ENCODE measurements at regions of chr12 and their contacts with region 1.

Region 1: DNA sequence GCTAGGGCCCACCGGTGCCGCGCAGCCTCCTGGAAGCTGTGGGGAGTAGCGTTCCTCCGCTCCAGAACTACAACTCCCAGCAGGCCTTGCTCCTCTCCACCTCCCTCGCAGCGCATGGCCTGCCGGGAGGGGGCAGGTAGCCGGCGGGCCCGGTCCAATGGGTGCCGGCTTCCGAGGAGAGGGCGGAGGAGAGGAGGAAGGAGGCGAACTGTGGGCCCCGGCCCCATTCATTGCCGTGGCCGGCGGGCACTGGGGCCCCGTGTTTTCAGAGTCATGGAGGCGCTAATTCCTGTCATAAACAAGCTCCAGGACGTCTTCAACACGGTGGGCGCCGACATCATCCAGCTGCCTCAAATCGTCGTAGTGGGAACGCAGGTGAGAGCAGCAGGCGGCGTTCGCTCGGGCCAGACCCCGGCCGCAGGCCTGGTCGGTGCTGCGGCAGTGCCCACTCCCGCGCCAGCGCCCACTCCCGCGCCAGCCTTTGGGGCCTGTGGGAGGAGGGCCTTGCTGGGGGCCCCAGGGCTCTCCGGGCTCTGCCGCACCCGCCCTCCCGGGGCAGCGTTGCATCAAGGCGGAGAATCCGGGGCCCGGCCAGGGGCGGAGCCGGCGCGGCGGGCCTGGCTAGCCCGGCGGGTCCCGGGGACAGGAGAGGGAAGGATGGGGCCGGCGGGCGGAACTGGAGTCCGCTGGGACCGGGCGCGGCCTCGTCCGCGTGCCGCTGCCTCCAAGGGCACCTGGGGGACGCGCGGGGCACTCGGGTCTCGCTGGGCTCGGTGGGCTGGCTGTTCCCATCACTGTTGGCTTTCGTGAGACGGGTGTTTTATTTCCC is at the start of gene DNM1L:
- DNase-seq: peak; percentile 92 to 97
- H3K4me3 ChIP-seq: peak within 1 kb of the TSS; percentile 73 to 83
- H3K27ac ChIP-seq: peak within 1 kb of the TSS; percentile 92 to 94
- H3K4me1 ChIP-seq: peaks cover 0 to 26% (median 8%) of the 10 kb centered on the region in 4 donors
- H3K27me3 ChIP-seq: no peaks in the 10 kb centered on the region
- CTCF ChIP-seq: peak in 1 of 2 experiments; percentile 20

Region 2: GRCh38 chr12:32106517-32107358 is 572.6 kb before region 1 on chr12 and contains the start of gene BICD1:
- intact Hi-C with region 1: loop called (anchors 10 kb)
- DNase-seq: peak; percentile 90 to 95
- H3K4me3 ChIP-seq: peak within 1 kb of the TSS; percentile 77 to 83
- H3K27ac ChIP-seq: peak within 1 kb of the TSS; percentile 88 to 92
- H3K4me1 ChIP-seq: peaks cover 0 to 19% (median 10%) of the 10 kb centered on the region in 4 donors
- H3K27me3 ChIP-seq: no peaks in the 10 kb centered on the region
- CTCF ChIP-seq: peak; percentile 27 to 35

Region 3: DNA sequence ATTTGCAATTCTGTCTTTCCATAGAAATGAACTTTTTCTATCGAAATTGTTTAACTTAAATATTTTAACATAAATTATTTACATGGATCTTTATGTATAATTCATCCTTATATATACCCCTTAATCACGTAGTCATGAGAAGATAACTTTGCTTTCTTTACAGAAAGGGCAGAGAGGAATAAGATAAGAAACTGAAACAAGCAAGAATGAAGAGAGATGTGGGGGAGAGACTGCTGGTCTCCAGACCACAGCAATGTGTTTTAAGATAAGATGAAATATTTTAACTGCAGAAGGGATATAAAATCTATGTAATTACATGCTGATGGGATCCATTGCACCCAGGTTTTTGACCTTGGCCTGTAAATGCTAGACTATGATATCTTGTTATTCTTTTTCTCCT is 34.9 kb before region 1 on chr12:
- intact Hi-C with region 1: no loop called
- DNase-seq: no peak
- H3K4me3 ChIP-seq: no peak overlapping the region
- H3K27ac ChIP-seq: no peak overlapping the region
- H3K4me1 ChIP-seq: peaks cover 0 to 6% (median 3%) of the 10 kb centered on the region in 4 donors
- H3K27me3 ChIP-seq: no peaks in the 10 kb centered on the region
- CTCF ChIP-seq: no peak

Measured in tibial artery (tissue), 4 donors.